ENCODE measurements at regions of chr7 and their contacts with region 1.

Region 1: GRCh38 chr7:130010689-130011412 is 40.3 kb downstream of the ZC3HC1 start:
- DNase-seq: peak; percentile 54 to 84
- ATAC-seq: peak; percentile 71 to 81
- H3K4me3 ChIP-seq: no peak overlapping the region
- H3K27ac ChIP-seq: peak overlapping the region in 3 of 4 donors; percentile 50 to 76 (median 51)
- H3K4me1 ChIP-seq: peaks cover 0 to 19% of the 10 kb centered on the region in 2 donors
- H3K27me3 ChIP-seq: no peaks in the 10 kb centered on the region
- CTCF ChIP-seq: peak; percentile 83 to 95 (median 93)
- POLR2A ChIP-seq: no peak

Region 2: GRCh38 chr7:129611246-129612111 is 399.4 kb before region 1 on chr7 and contains the start of gene NRF1:
- in situ Hi-C with region 1: no loop called
- intact Hi-C with region 1: loop called (anchors 5 kb)
- DNase-seq: peak; percentile 82 to 89
- ATAC-seq: peak; percentile 88 to 89
- H3K4me3 ChIP-seq: peak within 1 kb of the TSS; percentile 75 to 91 (median 80)
- H3K27ac ChIP-seq: peak within 1 kb of the TSS; percentile 91 to 97 (median 94)
- H3K4me1 ChIP-seq: peaks cover 20 to 25% of the 10 kb centered on the region in 2 donors
- H3K27me3 ChIP-seq: no peaks in the 10 kb centered on the region
- CTCF ChIP-seq: peak in 2 of 5 experiments; percentile 29 to 43
- POLR2A ChIP-seq: peak; percentile 77 to 81
- total RNA-seq, gene NRF1: 11.3 to 26.3 (median 18.0) TPM

Region 3: GRCh38 chr7:129664029-129665012 is 346.5 kb before region 1 on chr7:
- in situ Hi-C with region 1: loop called in 3 of 4 experiments (anchors 25 kb)
- intact Hi-C with region 1: no loop called
- DNase-seq: no peak
- ATAC-seq: no peak
- H3K4me3 ChIP-seq: no peak overlapping the region
- H3K27ac ChIP-seq: no peak overlapping the region
- H3K4me1 ChIP-seq: no peaks in the 10 kb centered on the region
- H3K27me3 ChIP-seq: no peaks in the 10 kb centered on the region
- CTCF ChIP-seq: peak; percentile 41 to 45 (median 43)
- POLR2A ChIP-seq: no peak

Region 4: DNA sequence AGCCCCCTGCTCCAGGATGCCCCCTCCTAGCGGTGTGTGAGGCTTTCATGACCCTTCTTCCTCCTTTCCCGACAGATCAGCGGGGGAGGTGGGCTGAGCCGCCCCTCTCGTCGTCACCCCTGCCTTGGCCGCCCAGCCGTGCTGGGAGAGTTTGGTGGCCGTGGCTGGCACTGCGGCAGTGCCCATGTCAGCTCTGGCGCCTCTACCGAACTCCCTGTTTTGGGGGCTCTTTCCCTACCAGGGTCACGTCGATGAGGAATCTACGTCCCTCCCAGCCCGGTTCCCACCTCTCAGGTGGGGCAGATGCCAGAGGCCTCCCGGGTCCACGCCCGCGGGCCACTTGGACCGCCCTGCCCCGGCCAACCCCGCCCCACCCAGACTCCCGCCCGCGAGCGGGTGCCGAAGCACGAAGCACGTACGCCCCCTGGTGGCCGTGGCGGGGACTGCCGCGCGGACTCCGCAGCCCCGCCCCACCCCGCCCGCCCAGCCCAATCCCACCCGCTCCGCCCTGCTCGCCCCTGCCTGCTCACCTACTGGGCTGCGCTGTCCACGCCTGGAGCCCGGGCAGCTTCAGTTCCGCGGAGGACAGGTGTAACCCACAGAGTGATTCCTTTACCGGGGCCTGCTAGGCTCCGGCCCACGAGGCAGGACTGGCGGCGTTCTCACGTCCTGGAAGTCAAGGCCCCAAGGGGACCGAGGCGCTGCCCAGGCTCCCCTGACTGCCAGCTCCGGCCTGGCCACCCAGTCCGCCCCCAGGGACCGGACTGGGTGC is 185.2 kb before region 1 on chr7:
- in situ Hi-C with region 1: loop called (anchors 5 to 10 kb)
- intact Hi-C with region 1: loop called (anchors 1 kb)
- DNase-seq: peak; percentile 71 to 73
- ATAC-seq: peak; percentile 63 to 68
- H3K4me3 ChIP-seq: peak overlapping the region; percentile 65 to 86 (median 76)
- H3K27ac ChIP-seq: peak overlapping the region; percentile 66 to 75 (median 74)
- H3K4me1 ChIP-seq: peaks cover 14 to 25% of the 10 kb centered on the region in 2 donors
- H3K27me3 ChIP-seq: no peaks in the 10 kb centered on the region
- CTCF ChIP-seq: peak; percentile 40 to 100 (median 81)
- POLR2A ChIP-seq: no peak

Region 5: DNA sequence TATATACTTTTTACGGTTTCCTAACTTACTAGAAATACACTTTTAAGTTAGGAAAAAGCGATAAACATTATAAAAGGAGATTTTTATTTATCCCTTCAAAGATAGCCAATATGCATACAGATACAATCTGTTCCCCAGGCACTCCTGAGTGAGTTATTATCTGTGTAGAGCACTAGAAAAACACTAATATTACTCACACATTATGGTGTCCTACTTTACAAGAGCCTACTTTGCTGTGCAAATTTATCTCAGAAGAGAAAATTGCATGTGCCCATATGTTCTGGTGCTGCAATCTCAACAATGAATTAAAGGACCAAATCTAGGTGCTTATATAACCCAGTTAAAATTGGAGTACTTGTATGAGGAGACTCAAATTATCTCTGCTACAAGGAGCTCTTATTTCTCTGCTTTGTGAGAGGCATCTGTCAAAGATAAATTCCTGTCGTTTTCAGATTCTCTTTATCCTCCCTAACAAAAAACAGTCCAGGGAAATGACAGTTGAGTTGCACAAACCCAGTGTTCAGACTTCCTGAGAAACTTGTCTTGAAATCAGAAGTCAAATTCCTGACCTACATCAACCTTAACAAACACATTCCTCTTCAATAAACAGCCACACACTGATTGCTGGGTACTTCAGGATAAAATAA is 398.3 kb after region 1 on chr7:
- in situ Hi-C with region 1: no loop called
- intact Hi-C with region 1: no loop called
- DNase-seq: no peak
- ATAC-seq: no peak
- H3K4me3 ChIP-seq: no peak overlapping the region
- H3K27ac ChIP-seq: no peak overlapping the region
- H3K4me1 ChIP-seq: no peaks in the 10 kb centered on the region
- H3K27me3 ChIP-seq: no peaks in the 10 kb centered on the region
- CTCF ChIP-seq: no peak
- POLR2A ChIP-seq: no peak

Measured in gastrocnemius medialis (tissue), 4 donors.